ENCODE measurements at regions of chr5 and their contacts with region 1.

Region 1: DNA sequence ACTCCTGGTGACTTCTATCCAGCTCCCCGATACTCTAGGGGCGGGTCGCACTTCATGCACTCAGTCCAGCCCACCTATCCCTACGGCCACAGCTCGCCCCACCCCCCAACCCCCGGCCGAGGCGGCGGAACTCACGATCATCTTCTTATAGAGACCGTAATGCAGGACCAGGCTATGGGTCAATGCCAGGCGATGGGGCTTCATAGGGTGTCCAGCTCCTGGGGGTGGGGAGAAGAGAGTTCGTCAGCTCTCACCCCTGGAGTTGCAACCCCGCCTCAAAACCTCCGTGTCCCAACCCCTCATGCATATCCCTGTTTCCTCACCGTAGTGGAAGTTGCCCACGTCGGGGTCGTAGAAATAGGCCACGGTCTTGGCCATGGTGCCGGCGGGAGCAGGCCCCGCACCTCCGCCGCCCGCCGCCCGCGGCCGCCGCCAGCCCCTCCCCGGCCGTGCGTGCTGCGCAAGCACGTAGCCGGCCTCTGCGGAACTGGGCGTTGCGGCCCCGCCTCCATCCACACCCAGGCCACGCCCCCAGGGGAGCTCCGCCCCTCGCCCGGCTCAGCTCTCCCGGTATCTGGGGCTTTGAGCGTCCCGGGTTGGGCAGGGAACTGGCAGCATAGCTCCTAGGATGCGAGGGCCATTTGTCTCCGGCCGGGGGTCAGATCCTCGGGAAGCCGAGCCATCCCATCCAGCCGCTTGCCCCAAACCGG is at the starts of genes HDAC3 and RELL2:
- DNase-seq: peak; percentile 99
- ATAC-seq: peak; percentile 69
- H3K4me3 Mint-ChIP-seq: peak within 1 kb of the TSS; percentile 94
- H3K27ac Mint-ChIP-seq: peak within 1 kb of the TSS; percentile 93
- H3K4me1 Mint-ChIP-seq: peaks cover 45% of the 10 kb centered on the region
- H3K27me3 Mint-ChIP-seq: no peaks in the 10 kb centered on the region
- total RNA-seq, gene HDAC3: 85.8 to 89.6 TPM
- total RNA-seq, gene RELL2: 31.4 to 31.6 TPM

Region 2: DNA sequence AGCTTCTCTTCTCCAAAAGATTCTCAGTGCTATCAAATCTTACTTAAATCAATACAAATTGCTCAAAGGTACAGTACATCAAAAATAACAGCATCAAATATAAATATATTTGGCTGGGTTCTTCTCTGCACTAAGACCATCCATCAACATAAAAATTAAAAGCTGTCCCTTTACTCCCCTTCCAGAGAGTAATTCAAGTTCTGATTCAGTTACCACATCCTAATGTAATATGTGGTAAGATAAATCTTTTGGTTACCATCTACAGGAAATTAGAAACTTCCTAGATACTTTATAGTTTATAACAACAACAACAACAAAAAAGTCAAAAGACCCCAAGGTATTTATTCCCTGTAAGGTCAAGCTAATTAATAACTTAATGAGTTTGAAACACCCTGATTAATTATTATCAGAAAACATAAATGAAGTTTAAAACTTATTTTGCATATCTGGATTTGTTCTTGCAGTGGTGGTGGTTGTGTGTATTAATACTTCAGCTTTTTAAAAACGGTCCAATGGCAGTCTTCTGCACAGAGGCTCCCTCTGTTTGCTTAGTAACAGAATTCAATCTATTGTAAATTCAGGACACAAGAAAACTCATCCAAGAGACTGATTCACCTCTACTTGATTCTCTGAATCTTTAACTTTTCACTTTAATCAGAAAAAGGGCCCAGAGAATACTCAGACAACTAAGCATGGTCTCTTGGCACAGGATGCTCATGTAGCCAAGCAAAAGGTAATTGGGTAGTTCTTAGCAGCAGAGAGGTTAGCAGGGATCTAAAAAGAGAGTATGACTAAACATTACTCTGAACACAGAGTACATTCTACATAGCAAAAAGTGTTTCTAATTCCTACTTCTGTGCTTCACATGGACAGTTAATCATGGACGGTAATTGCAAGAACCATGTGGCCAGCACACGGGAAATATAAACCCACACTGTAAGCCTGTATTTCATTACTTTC is 37.9 kb before region 1 on chr5:
- POLR2A ChIA-PET with region 1: interaction called, 16 read pairs
- DNase-seq: no peak
- ATAC-seq: peak; percentile 69
- H3K4me3 Mint-ChIP-seq: peak overlapping the region; percentile 30
- H3K27ac Mint-ChIP-seq: peak overlapping the region; percentile 42
- H3K4me1 Mint-ChIP-seq: peaks cover 58% of the 10 kb centered on the region
- H3K27me3 Mint-ChIP-seq: no peaks in the 10 kb centered on the region

Region 3: DNA sequence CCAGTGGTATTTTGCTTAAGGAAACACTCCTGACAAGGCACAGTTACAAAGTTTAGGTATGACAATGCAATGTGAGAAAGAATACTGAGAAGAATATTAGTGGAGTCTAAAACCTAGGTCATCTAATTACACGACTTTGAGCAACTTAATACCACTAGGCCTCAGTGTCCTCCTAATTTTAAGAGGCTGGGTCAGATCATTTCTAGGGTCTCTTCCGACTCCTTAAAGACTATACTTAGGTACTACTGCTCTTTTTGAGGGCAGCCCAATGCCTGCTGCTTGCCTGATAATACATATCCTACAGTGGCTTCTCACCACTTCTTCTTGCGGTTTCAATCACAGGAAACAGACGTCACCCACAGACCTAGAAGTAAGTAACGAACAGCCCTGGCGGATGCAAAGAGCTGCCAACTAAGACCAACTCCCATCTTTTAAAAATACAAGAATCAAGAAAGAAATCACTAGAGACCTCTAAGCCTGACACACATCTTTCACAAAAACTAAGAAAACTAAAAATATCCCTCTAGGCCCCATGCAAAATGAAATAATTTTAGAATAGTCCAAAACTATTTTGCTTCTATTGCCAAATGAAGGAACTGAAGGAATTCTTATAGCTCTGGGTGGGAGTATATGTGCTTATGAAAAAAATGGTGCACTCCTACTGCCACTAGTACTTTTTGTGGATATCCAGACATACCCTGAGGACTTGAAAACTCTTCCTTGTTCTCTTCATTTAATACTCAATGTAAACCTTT is 30.9 kb before region 1 on chr5:
- POLR2A ChIA-PET with region 1: interaction called, 10 read pairs
- DNase-seq: no peak
- ATAC-seq: peak; percentile 94
- H3K4me3 Mint-ChIP-seq: peak overlapping the region; percentile 73
- H3K27ac Mint-ChIP-seq: peak overlapping the region; percentile 87
- H3K4me1 Mint-ChIP-seq: peaks cover 69% of the 10 kb centered on the region
- H3K27me3 Mint-ChIP-seq: no peaks in the 10 kb centered on the region

Region 4: DNA sequence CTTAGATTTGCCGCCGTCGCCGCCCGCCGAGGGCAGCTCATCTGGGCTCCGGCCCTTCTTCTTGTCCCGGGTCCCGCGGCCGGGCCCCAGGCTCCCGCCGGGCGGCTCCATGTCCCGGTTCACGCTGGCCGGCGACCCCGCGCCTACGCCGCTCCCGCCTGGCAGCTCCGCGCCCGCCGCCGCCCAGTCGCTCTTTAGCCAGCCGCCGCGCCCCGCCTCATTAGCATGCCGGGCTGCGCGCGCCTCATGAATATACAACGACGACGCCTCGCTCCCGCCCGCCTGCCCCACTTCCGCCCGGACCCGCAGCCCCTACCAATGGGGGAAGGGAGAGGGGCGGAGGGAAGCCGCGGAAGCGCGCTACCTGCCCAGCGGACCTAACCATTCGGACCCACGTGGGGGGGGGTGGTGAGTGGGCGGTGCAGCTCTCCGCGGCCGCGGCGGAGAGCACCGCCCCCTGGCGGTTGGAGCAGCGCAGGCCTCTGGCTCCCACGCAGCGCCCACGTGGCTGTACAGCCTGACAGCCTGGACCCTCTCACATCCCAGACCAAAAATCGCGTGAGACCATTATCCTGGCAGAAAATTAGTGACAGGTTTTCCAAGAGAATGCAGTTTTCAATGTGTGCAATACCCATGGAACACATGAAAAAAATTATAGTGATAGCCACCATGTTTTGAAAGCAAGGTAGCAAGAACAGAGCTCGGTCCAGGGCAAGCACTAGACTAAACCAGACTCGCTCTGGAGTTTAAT is 17.6 kb before region 1 on chr5 and contains the start of gene DIAPH1:
- POLR2A ChIA-PET with region 1: interaction called, 80 read pairs
- DNase-seq: peak; percentile 97
- ATAC-seq: peak; percentile 82
- H3K4me3 Mint-ChIP-seq: peak within 1 kb of the TSS; percentile 88
- H3K27ac Mint-ChIP-seq: peak within 1 kb of the TSS; percentile 85
- H3K4me1 Mint-ChIP-seq: peaks cover 44% of the 10 kb centered on the region
- H3K27me3 Mint-ChIP-seq: no peaks in the 10 kb centered on the region
- total RNA-seq, gene DIAPH1: 244 to 256 TPM

Region 5: GRCh38 chr5:141650851-141651727 is 14.5 kb after region 1 on chr5 and contains the start of gene FCHSD1:
- POLR2A ChIA-PET with region 1: interaction called, 107 read pairs
- DNase-seq: peak; percentile 89
- ATAC-seq: peak; percentile 91
- H3K4me3 Mint-ChIP-seq: peak within 1 kb of the TSS; percentile 92
- H3K27ac Mint-ChIP-seq: peak within 1 kb of the TSS; percentile 96
- H3K4me1 Mint-ChIP-seq: peaks cover 30% of the 10 kb centered on the region
- H3K27me3 Mint-ChIP-seq: no peaks in the 10 kb centered on the region
- total RNA-seq, gene FCHSD1: 98.3 to 99.1 TPM

Region 6: DNA sequence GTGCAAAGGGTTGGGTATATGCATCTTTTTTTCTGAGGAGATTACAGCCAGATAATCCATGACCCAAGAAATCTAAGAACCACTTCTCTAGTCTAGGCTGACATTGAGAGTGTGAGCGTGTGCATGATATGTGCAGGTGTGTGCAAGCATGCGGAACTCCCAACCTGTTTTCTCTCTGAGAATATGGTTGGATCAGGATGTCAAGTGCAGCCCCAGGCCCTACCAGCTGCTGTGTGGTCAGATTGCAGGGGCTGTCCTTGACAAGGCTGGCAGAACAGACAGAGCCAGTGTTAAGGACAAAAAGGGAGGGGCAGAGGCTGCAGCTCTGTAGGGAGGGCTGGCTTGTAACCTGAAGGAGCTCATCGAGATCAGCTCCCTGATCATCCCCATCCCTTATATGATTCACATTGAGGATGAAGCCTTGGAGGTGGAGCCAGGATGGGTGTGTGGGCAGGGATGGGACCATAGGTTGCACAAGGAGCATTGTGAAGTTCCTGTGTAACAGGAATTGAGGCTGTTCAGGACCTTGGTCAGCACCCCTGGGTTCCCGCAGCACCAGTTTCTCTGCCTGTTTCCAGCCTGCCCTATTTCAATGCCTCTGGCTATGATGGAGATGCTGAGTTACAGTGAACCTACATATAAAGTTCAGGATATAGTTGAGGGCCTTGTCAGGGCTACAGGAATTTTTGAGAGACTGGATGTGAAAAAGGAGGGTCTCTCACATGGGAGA is 98.1 kb after region 1 on chr5:
- POLR2A ChIA-PET with region 1: no interaction called
- DNase-seq: peak; percentile 55
- ATAC-seq: peak; percentile 56
- H3K4me3 Mint-ChIP-seq: no peak overlapping the region
- H3K27ac Mint-ChIP-seq: no peak overlapping the region
- H3K4me1 Mint-ChIP-seq: peaks cover 13% of the 10 kb centered on the region
- H3K27me3 Mint-ChIP-seq: peaks cover 9% of the 10 kb centered on the region

Measured in activated naive CD8-positive, alpha-beta T cell treated with anti-CD3 and anti-CD28 coated beads, Interleukin-2, amount 10 ng/mL, durations not matched to agents 7 days and 5 days (primary cell).